ENCODE measurements at regions of chr5 and their contacts with region 1.

Region 1: DNA sequence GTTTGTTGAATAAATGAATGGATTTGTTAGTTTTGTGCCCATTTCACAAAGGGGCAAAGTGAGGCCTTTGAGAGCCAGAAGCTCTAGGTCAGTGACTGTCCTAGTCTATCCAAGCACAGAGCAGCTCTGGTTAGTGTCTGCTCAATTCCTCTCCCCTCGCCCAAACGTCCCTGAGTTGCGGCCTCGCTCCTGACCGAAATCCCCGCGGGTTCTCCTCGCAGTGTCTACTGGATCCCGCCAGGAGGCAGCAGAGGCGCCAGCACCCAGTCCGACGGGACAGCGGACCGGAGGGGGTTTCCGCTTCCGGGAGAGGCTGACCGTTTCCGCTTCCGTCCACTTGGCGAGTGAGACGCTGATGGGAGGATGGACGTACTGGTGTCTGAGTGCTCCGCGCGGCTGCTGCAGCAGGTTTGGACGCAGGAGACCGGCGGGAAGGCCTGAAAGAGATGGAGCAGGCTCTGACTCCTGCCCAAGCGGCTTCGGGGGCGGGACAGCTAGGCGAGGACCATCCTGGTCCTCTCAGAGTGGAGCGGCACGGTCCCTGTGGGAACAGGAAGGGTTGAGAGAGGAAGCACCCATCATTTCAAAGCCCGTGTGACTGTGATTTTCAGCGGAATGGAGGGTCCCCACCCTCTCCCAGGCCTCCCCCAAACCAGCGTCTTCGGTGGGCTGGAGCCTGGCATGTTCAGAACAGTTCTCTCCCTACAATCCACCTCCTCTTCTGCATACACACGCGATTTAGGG is at the start of gene RARS1:
- DNase-seq: peak; percentile 86
- H3K4me3 ChIP-seq: peak within 1 kb of the TSS; percentile 76
- H3K27ac ChIP-seq: peak within 1 kb of the TSS; percentile 57
- H3K27me3 ChIP-seq: no peaks in the 10 kb centered on the region
- CTCF ChIP-seq: peak; percentile 98
- polyA plus RNA-seq, gene RARS1: 112 and 147 TPM in 2 replicates

Region 2: DNA sequence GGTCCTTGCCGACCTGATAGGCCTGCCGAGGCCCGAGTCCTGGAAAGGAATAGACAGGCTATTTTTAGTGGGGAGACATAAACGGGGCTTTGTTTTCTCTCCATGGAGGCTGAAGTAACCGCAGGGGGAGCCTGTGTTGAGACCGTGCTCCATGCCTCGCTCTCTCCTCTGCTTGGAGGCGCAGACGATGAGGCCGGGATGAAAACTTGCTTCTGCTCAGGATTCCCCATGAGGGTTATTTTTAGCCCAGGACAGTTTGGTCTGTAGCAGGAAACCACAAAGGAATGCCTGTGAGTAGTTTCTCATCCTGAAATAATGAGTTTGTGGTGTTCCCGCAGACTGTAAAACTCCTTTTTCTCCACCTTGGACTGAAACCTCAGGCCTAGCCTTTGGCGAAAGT is 81.9 kb before region 1 on chr5:
- CTCF ChIA-PET with region 1: no interaction called
- POLR2A ChIA-PET with region 1: no interaction called
- DNase-seq: peak; percentile 70
- H3K4me3 ChIP-seq: no peak overlapping the region
- H3K27ac ChIP-seq: peak overlapping the region; percentile 61
- H3K27me3 ChIP-seq: no peaks in the 10 kb centered on the region
- CTCF ChIP-seq: no peak; the same call in 1 of the 2 replicates

Region 3: GRCh38 chr5:168472329-168472728 is 14.0 kb before region 1 on chr5:
- CTCF ChIA-PET with region 1: interaction called, 11 read pairs
- POLR2A ChIA-PET with region 1: interaction called, 4 read pairs
- DNase-seq: peak; percentile 86
- H3K4me3 ChIP-seq: no peak overlapping the region
- H3K27ac ChIP-seq: peak overlapping the region; percentile 74
- H3K27me3 ChIP-seq: no peaks in the 10 kb centered on the region
- CTCF ChIP-seq: peak; percentile 53